ENCODE measurements at regions of chr10 and their contacts with region 1.

Region 1: DNA sequence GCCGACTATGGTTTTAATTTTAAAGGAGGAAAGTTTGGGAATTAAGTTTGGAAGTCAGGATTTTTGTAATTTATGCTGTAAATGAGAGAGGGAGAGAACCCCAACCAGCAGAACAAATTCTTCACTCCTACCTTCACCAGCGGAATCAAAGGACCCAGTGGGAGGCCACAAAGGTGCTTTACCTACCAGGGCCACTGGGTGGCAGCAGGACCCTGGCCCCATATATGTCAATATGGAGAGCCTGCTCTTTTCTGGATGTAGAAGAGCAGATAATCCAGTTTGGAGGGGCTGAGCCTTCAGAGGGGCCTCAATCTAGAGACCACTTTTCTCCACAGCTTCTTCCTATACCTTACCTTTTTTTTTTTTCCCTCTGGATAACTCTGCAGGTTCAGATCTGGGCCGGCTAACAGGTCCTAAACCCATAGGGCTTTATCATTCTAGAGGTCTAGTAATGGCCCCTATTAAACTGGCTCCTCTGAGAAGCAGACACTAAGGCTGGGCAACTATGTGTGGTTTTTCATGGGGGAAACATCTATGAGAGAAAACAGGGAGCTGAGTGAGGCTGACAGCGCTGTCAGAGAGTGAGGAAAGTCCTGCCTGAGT is 8.5 kb upstream of the SCD start:
- DNase-seq: peak; percentile 78

Region 2: GRCh38 chr10:100433253-100434240 is 95.0 kb after region 1 on chr10:
- in situ Hi-C with region 1: loop called (anchors 10 kb)
- DNase-seq: peak; percentile 92

Measured in SK-MEL-5 (cell line).